SK-N-SH (cell line): ENCODE measurements at regions of chr19 and their contacts with region 1.

Region 1: GRCh38 chr19:3429581-3430080 is 50.7 kb downstream of the SMIM24 start:
- DNase-seq: peak; percentile 86
- H3K4me3 ChIP-seq: peak overlapping the region in 1 of 2 experiments; percentile 36; a peak in 1 of 4 replicates
- H3K27ac ChIP-seq: peak overlapping the region in 1 of 2 experiments; percentile 84; a peak in 2 of 4 replicates
- H3K4me1 ChIP-seq: peaks cover 0 to 9% of the 10 kb centered on the region in 2 experiments; a peak in 1 of 4 replicates
- H3K27me3 ChIP-seq: no peaks in the 10 kb centered on the region
- CTCF ChIP-seq: peak; percentile 97
- EP300 ChIP-seq: no peak
- RAD21 ChIP-seq: peak; percentile 88

Region 2: GRCh38 chr19:3330047-3330446 is 99.6 kb before region 1 on chr19:
- CTCF ChIA-PET with region 1: interaction called, 47 read pairs
- POLR2A ChIA-PET with region 1: no interaction called
- DNase-seq: no peak
- H3K4me3 ChIP-seq: no peak overlapping the region
- H3K27ac ChIP-seq: no peak overlapping the region
- H3K4me1 ChIP-seq: no peaks in the 10 kb centered on the region; a peak in 1 of 4 replicates
- H3K27me3 ChIP-seq: no peaks in the 10 kb centered on the region
- CTCF ChIP-seq: no peak
- EP300 ChIP-seq: no peak
- RAD21 ChIP-seq: no peak

Region 3: GRCh38 chr19:3365836-3366752 is 63.5 kb before region 1 on chr19 and contains the start of gene NFIC:
- CTCF ChIA-PET with region 1: interaction called, 15 read pairs
- POLR2A ChIA-PET with region 1: interaction called, 4 read pairs
- DNase-seq: peak; percentile 84
- H3K4me3 ChIP-seq: peak within 1 kb of the TSS; percentile 63 to 79
- H3K27ac ChIP-seq: peak within 1 kb of the TSS; percentile 74 to 89
- H3K4me1 ChIP-seq: peaks cover 18 to 40% of the 10 kb centered on the region in 2 experiments; a peak in 3 of 4 replicates
- H3K27me3 ChIP-seq: no peaks in the 10 kb centered on the region
- CTCF ChIP-seq: no peak
- EP300 ChIP-seq: no peak
- RAD21 ChIP-seq: no peak
- polyA plus RNA-seq, gene NFIC: 2.6 and 7.2 TPM in 2 replicates

Region 4: GRCh38 chr19:3387645-3388589 is 41.7 kb before region 1 on chr19:
- CTCF ChIA-PET with region 1: interaction called, 38 read pairs
- POLR2A ChIA-PET with region 1: interaction called, 9 read pairs
- DNase-seq: peak; percentile 98
- H3K4me3 ChIP-seq: no peak overlapping the region
- H3K27ac ChIP-seq: peak overlapping the region; percentile 66 to 96
- H3K4me1 ChIP-seq: peaks cover 28 to 50% of the 10 kb centered on the region in 2 experiments; a peak in 3 of 4 replicates
- H3K27me3 ChIP-seq: no peaks in the 10 kb centered on the region
- CTCF ChIP-seq: no peak
- EP300 ChIP-seq: peak; percentile 36 to 78; a peak in 1 of 4 replicates
- RAD21 ChIP-seq: peak; percentile 32

Region 5: DNA sequence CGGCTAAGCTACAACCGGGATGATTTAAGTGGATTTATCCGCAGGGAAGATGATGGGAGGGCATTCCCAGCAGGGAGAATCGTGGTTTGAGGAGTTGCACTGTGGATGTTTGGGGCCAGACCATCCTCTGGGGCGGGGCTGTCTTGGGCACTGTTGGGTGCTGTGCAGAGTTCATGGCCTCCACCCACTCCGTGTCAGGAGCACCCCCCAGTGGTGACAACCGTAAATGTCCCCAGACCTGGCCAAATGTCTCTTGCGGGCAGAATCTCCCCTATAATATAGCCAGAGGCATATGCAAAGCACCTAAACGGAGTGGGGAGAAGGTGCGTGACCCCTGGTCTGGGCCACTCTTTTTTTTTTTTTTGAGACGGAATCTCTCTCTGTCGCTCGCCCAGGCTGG is 10.5 kb after region 1 on chr19:
- CTCF ChIA-PET with region 1: interaction called, 31 read pairs
- POLR2A ChIA-PET with region 1: interaction called, 4 read pairs
- DNase-seq: peak; percentile 67
- H3K4me3 ChIP-seq: no peak overlapping the region
- H3K27ac ChIP-seq: peak overlapping the region in 1 of 2 experiments; percentile 1; a peak in 1 of 4 replicates
- H3K4me1 ChIP-seq: peaks cover 0 to 41% of the 10 kb centered on the region in 2 experiments; a peak in 1 of 4 replicates
- H3K27me3 ChIP-seq: no peaks in the 10 kb centered on the region
- CTCF ChIP-seq: peak; percentile 45
- EP300 ChIP-seq: no peak
- RAD21 ChIP-seq: peak; percentile 50